Activated T-helper 2 cell treated with anti-CD3 and anti-CD28 coated beads, Interferon-gamma antibody, Interleukin-2, Interleukin-4, amounts not matched to agents 10 μg/mL and 5 μg/mL and 100 μg/mL, durations not matched to agents 14 hours and 24 hours and 36 hours (primary cell): ENCODE measurements at regions of chr11 and their contacts with region 1.

Region 1: DNA sequence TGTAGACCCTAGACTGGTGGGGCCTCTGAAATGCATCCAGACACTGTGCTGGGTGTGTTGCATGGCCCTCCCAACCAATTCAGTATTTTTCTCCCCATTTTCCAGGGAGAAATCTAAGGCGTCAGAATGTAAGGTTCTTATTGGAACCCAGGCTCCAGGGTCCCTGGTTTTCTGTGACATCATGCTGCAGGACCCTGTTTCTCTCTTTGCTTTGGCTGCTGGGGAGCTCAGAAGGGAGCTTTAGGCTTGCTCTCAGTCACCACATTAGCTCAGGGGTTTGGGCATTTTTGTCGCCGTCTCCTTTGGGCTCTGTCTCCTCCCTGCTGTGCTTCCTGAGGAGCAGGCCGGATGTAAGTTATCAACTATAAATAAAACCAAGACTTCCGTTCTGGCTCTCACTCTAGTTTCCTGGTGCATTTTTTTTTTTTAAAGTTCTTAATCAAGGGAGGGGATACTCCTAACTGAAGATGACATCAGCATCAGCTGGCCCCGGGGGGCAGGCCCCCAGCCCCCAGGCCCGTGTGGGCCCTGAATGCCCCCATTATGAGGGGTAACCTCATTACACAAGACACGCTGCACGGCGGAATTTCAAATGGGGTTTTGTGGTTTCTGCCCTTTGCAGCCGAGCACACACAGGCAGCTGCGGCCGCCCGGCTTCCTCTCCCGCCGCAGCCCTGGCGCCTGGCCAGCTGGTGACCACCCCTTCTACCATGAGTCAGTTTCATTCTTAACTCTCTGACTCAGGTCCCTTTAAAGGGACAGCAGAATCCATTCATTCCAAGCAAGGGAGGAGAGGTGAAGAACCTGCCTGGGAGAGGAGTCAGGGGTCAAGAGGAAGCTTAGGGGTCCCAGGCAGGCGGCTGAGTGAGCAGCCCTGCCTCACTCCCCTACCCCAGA is 3.2 kb downstream of the MYEOV start:
- DNase-seq: peak; percentile 80
- H3K4me3 Mint-ChIP-seq: peak overlapping the region; percentile 46
- H3K27ac Mint-ChIP-seq: peak overlapping the region; percentile 79
- H3K4me1 Mint-ChIP-seq: peaks cover 43% of the 10 kb centered on the region
- H3K27me3 Mint-ChIP-seq: no peaks in the 10 kb centered on the region

Region 2: DNA sequence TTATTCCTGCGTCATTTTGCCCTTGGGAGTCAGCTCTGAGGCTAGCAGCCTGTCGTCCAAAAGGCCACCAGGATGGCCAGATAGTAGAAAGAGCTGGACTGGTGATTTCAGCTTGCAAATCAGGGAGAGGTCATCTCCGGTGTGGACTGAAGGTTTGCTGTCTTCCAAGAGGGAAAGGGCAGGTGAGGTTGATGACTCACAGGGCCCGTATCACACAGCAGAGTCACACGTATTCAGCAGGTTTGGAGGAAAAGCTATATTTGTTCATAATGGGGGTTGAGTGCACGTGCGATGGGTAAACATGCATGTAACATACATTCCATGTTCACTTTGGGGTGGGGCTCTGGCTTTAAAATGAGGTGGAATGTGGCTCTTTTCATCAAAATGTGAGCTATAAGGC is 419.1 kb before region 1 on chr11:
- intact Hi-C with region 1: no loop called
- DNase-seq: no peak
- H3K4me3 Mint-ChIP-seq: no peak overlapping the region
- H3K27ac Mint-ChIP-seq: no peak overlapping the region
- H3K4me1 Mint-ChIP-seq: no peaks in the 10 kb centered on the region
- H3K27me3 Mint-ChIP-seq: peaks cover 2% of the 10 kb centered on the region

Region 3: GRCh38 chr11:69122642-69123431 is 174.3 kb before region 1 on chr11:
- intact Hi-C with region 1: loop called (anchors 5 kb)
- DNase-seq: peak; percentile 44
- H3K4me3 Mint-ChIP-seq: peak overlapping the region; percentile 62
- H3K27ac Mint-ChIP-seq: peak overlapping the region; percentile 80
- H3K4me1 Mint-ChIP-seq: peaks cover 26% of the 10 kb centered on the region
- H3K27me3 Mint-ChIP-seq: no peaks in the 10 kb centered on the region

Region 4: DNA sequence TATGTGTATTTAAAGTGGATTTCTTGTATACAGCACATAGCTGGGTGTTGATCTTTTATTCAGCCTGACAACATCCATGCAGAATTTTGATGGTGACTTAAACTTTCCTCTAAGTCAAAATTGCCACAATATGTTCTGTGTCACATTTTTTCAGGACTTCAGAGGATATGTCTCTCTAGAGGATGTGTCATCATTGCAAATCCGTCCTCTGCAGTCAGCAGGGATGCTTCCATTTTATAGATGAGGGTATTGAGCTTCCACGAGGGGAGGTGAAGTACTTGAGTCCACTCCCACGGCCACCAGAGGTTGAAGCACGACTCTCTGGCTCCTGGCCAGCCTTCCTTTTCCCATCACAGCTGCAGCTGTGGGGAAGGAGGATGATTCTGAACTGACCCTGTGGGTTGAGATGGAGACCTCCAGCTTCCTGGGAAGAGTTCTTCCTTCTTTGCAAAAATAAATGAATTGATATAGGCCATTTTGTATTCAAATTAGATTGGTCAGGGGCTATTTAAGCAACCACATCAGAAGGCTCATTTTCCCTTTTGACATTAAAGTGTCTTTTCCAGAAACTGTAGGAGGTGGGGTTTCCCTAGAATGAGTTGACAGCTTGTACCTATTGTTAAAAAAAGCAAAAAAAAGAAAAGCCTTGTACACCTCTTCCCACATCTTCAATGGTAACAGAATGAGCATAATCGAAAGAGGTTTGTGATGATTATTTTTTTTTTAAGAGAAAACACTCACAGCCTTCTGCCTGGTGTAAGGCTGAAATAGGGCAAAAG is 58.4 kb before region 1 on chr11:
- intact Hi-C with region 1: loop called (anchors 1 kb)
- DNase-seq: no peak
- H3K4me3 Mint-ChIP-seq: peak overlapping the region; percentile 2
- H3K27ac Mint-ChIP-seq: peak overlapping the region; percentile 85
- H3K4me1 Mint-ChIP-seq: peaks cover 22% of the 10 kb centered on the region
- H3K27me3 Mint-ChIP-seq: peaks cover 2% of the 10 kb centered on the region

Region 5: DNA sequence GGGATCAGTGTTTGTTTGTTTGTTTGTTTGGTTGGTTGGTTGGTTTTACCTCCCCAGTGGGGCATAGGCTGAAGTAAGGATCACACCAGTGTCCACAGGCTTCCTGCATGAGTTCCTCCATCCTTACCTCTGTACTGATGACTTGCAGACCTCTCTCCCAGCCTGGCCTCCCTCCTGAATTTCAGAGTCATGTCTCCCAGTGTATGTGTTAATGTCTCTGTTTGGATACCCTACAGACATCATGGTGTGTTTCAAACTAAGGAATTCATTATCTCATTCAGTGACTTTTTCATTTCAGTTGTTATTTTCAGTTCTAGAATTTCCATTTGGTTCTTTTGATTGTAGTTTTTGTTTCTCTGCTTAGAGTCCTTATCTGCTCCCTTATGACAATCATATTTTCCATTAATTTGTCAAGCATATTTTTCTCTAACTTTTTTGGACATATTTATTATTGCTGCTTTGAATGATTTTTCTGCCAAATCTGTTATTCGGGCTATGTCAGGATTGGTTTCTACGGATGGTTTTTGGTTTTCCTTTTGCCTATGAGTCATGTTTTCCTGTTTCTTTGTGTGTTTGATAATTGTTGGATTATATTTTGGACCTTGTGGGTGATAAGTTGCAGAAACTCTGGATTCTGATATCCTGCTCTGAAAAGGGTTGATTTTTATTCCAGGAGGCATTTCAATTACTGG is 20.4 kb after region 1 on chr11:
- intact Hi-C with region 1: loop called (anchors 2 kb)
- DNase-seq: no peak
- H3K4me3 Mint-ChIP-seq: no peak overlapping the region
- H3K27ac Mint-ChIP-seq: peak overlapping the region; percentile 73
- H3K4me1 Mint-ChIP-seq: peaks cover 10% of the 10 kb centered on the region
- H3K27me3 Mint-ChIP-seq: no peaks in the 10 kb centered on the region

Region 6: GRCh38 chr11:69352715-69353325 is 55.7 kb after region 1 on chr11:
- intact Hi-C with region 1: loop called (anchors 5 kb)
- DNase-seq: no peak
- H3K4me3 Mint-ChIP-seq: no peak overlapping the region
- H3K27ac Mint-ChIP-seq: no peak overlapping the region
- H3K4me1 Mint-ChIP-seq: peaks cover 7% of the 10 kb centered on the region
- H3K27me3 Mint-ChIP-seq: no peaks in the 10 kb centered on the region

Region 7: GRCh38 chr11:69368119-69368881 is 71.2 kb after region 1 on chr11:
- intact Hi-C with region 1: no loop called
- DNase-seq: no peak
- H3K4me3 Mint-ChIP-seq: no peak overlapping the region
- H3K27ac Mint-ChIP-seq: no peak overlapping the region
- H3K4me1 Mint-ChIP-seq: peaks cover 2% of the 10 kb centered on the region
- H3K27me3 Mint-ChIP-seq: peaks cover 4% of the 10 kb centered on the region

Region 8: GRCh38 chr11:69443138-69443967 is 146.2 kb after region 1 on chr11:
- intact Hi-C with region 1: loop called (anchors 2 kb)
- DNase-seq: peak; percentile 71
- H3K4me3 Mint-ChIP-seq: peak overlapping the region; percentile 59
- H3K27ac Mint-ChIP-seq: peak overlapping the region; percentile 78
- H3K4me1 Mint-ChIP-seq: peaks cover 17% of the 10 kb centered on the region
- H3K27me3 Mint-ChIP-seq: peaks cover 11% of the 10 kb centered on the region

Region 9: DNA sequence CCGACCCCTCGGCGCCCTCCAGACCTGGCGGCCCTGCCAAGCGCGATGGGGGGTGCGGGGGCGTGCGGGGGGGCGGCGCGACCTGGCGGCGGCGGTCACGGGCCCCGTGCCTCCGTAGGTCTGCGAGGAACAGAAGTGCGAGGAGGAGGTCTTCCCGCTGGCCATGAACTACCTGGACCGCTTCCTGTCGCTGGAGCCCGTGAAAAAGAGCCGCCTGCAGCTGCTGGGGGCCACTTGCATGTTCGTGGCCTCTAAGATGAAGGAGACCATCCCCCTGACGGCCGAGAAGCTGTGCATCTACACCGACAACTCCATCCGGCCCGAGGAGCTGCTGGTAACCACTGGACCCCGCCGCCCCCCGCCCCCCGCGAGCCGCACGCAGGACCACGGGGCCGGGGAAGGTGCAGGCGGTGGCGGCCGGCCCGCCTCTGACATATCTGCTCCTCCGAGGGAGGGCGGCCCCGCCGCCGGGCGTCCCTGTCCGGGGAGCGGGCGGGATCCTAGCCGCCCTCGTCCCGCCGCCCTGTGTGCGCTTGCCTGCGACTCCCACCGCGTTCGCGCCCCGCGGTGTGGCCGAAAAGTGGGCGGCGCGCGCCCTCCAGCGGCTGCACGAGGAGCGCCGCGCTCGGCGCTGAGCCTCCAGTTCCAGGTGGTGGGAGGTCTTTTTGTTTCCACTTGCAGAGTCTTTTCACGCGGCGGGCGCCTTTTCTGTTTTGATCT is 345.9 kb after region 1 on chr11:
- intact Hi-C with region 1: loop called (anchors 2 kb)
- DNase-seq: peak; percentile 64
- H3K4me3 Mint-ChIP-seq: peak overlapping the region; percentile 56
- H3K27ac Mint-ChIP-seq: no peak overlapping the region
- H3K4me1 Mint-ChIP-seq: peaks cover 3% of the 10 kb centered on the region
- H3K27me3 Mint-ChIP-seq: peaks cover 27% of the 10 kb centered on the region